ENCODE measurements at regions of chr14 and their contacts with region 1.

Region 1: DNA sequence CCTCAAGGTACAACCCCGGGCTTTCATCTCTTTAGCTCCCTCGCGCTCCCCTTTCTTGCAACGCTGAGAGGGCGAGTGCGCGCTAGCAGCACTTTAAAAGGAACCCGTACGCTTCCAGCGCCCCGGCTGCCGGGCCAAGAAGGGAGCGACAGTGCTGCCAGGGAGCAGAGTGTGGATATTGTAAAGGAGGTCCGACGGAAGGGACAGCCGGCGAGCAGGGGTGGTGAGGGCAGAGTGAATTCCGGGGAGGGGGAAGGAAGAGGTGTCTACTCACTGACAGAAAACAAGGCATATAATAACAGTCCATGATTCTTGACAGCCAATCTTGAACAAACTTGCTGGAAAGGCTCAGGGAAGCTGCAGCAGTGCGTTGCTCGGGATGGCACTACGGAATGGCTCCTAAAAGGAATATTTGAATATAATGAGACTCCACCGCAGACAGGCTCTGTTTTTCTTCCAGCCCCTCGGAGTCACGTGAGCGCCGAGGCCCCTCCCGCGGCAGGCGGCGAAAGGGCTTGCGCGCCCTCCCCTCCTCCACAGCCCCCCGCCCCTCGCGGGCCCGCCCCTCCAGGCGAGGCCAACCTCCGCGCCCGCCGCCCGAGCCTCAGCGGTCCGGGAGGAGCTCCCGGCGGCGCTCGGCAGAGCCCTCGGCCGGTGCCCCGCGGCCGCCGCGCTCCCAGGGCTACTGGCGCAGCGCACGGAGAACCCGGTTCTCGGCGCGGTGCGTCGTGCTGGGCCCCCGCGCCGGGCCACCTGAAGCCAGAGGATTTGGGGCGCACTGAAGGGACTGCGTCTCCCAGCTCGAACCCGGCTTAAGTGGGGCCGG is 3.4 kb downstream of the BMP4 start:
- DNase-seq: peak; percentile 82
- H3K4me3 Mint-ChIP-seq: peak overlapping the region; percentile 85
- H3K27ac Mint-ChIP-seq: peak overlapping the region; percentile 87
- H3K4me1 Mint-ChIP-seq: peaks cover 10% of the 10 kb centered on the region
- H3K27me3 Mint-ChIP-seq: no peaks in the 10 kb centered on the region
- CTCF ChIP-seq: no peak

Region 2: GRCh38 chr14:53850714-53851296 is 102.4 kb before region 1 on chr14:
- CTCF ChIA-PET with region 1: no interaction called
- intact Hi-C with region 1: loop called (anchors 2 kb)
- DNase-seq: no peak
- H3K4me3 Mint-ChIP-seq: peak overlapping the region; percentile 67
- H3K27ac Mint-ChIP-seq: peak overlapping the region; percentile 96
- H3K4me1 Mint-ChIP-seq: peaks cover 62% of the 10 kb centered on the region
- H3K27me3 Mint-ChIP-seq: no peaks in the 10 kb centered on the region
- CTCF ChIP-seq: no peak

Region 3: DNA sequence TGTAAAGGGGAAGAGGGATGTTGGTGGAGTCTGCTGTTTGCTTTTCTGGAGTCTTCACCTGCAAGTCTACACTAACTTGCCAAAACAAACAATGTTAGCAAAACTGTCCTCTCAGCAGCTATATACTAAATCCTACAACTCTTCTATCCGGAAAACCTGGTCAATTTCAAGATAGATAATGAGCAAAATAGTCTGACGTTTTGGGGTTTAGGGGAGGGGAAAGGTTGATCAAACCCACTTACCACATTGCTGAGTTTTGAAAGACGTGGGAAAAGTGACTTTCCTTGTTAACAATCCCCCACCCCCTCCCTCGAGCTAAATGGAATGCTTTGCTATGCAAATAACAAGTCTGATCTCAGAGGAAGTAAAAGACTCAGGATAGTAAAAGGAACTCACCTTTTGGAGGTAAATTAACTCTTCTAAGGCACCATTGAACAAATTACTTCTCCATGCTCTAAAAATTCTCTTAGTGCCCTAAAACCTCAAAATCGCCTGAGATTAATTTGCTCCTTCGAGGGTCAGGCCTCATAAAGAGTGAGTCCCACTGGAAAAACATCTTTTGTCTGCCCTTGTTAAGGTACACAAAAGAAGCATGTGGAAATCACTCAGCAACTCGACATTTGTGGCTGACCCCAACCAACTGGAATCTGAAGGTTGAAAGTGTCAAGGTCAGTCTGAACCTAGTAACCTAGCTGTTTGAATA is 10.0 kb before region 1 on chr14:
- CTCF ChIA-PET with region 1: interaction called, 10 read pairs
- intact Hi-C with region 1: no loop called
- DNase-seq: no peak
- H3K4me3 Mint-ChIP-seq: peak overlapping the region; percentile 29
- H3K27ac Mint-ChIP-seq: peak overlapping the region; percentile 56
- H3K4me1 Mint-ChIP-seq: peaks cover 25% of the 10 kb centered on the region
- H3K27me3 Mint-ChIP-seq: no peaks in the 10 kb centered on the region
- CTCF ChIP-seq: no peak

Region 4: DNA sequence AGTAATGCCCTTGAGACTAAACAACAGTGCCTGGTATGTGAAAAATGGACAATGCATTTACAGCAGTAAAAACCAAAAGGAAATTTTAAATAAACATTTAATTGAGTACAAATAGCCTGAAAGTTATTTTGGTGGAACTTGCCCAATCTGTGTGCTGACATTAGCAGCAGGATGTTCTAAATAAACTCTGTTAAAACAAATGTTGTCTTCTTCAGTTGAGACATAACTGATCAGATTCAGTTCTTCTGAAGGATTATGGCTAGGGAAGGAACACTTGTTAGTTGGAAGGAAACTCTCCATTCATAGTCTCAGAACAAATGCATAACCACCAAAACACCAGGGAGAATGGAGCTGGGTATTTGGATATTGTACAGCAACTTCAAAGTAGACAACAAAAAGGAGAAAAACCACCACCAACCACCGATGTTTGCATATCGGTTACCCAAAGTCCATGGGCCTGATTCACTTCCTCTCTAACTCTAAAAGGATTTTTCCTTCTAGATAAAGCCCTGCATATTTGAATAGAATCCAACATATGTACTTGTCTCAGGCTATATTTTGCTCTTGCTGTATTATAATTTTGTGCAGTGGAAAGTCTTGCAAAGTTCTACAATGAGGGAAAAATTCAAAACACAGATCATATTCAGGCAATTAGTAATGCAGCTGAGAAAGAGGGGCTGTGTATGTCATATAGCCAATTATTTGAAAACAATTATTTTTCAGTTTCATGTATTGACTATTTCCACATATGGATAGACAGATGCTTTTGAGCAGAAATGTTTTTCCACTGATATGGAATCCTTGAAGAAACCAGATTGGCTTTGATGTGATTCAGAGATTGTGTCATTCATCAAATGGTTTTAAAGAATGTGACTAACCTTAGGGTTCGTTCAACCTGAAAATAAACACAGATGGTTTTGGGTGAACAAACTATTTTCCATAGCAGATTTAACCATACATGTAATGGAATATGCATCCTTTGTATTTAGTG is 155.6 kb after region 1 on chr14:
- CTCF ChIA-PET with region 1: no interaction called
- intact Hi-C with region 1: loop called (anchors 10 kb)
- DNase-seq: peak; percentile 39
- H3K4me3 Mint-ChIP-seq: no peak overlapping the region
- H3K27ac Mint-ChIP-seq: peak overlapping the region; percentile 61
- H3K4me1 Mint-ChIP-seq: peaks cover 41% of the 10 kb centered on the region
- H3K27me3 Mint-ChIP-seq: no peaks in the 10 kb centered on the region
- CTCF ChIP-seq: no peak

Region 5: GRCh38 chr14:54169254-54169924 is 216.2 kb after region 1 on chr14:
- CTCF ChIA-PET with region 1: no interaction called
- intact Hi-C with region 1: loop called (anchors 2 kb)
- DNase-seq: peak; percentile 50
- H3K4me3 Mint-ChIP-seq: no peak overlapping the region
- H3K27ac Mint-ChIP-seq: peak overlapping the region; percentile 31
- H3K4me1 Mint-ChIP-seq: peaks cover 32% of the 10 kb centered on the region
- H3K27me3 Mint-ChIP-seq: no peaks in the 10 kb centered on the region
- CTCF ChIP-seq: no peak

Region 6: GRCh38 chr14:54338696-54339317 is 385.6 kb after region 1 on chr14:
- CTCF ChIA-PET with region 1: no interaction called
- intact Hi-C with region 1: loop called (anchors 10 kb)
- DNase-seq: peak; percentile 12
- H3K4me3 Mint-ChIP-seq: no peak overlapping the region
- H3K27ac Mint-ChIP-seq: no peak overlapping the region
- H3K4me1 Mint-ChIP-seq: peaks cover 10% of the 10 kb centered on the region
- H3K27me3 Mint-ChIP-seq: no peaks in the 10 kb centered on the region
- CTCF ChIP-seq: peak; percentile 31

Measured in Calu3 (cell line).